ENCODE measurements at regions of chr2 and their contacts with region 1.

Region 1: GRCh38 chr2:11784747-11785610 is 38.5 kb downstream of the LPIN1 start:
- DNase-seq: peak; percentile 12 to 67 (median 48)
- ATAC-seq: peak; percentile 74
- H3K4me3 ChIP-seq: no peak overlapping the region
- H3K4me3 Mint-ChIP-seq: no peak overlapping the region
- H3K27ac ChIP-seq: no peak overlapping the region
- H3K27ac Mint-ChIP-seq: no peak overlapping the region
- H3K4me1 ChIP-seq: no peaks in the 10 kb centered on the region
- H3K4me1 Mint-ChIP-seq: no peaks in the 10 kb centered on the region
- H3K27me3 ChIP-seq: no peaks in the 10 kb centered on the region
- H3K27me3 Mint-ChIP-seq: no peaks in the 10 kb centered on the region
- CTCF ChIP-seq: peak; percentile 90

Region 2: GRCh38 chr2:11738589-11739436 is 46.2 kb before region 1 on chr2:
- CTCF ChIA-PET with region 1: interaction called, 27 read pairs
- POLR2A ChIA-PET with region 1: no interaction called
- intact Hi-C with region 1: no loop called
- DNase-seq: peak in 4 of 9 experiments; percentile 26 to 70 (median 48)
- ATAC-seq: peak; percentile 56
- H3K4me3 ChIP-seq: no peak overlapping the region
- H3K4me3 Mint-ChIP-seq: no peak overlapping the region
- H3K27ac ChIP-seq: no peak overlapping the region
- H3K27ac Mint-ChIP-seq: no peak overlapping the region
- H3K4me1 ChIP-seq: peaks cover 4% of the 10 kb centered on the region
- H3K4me1 Mint-ChIP-seq: peaks cover 3% of the 10 kb centered on the region
- H3K27me3 ChIP-seq: no peaks in the 10 kb centered on the region
- H3K27me3 Mint-ChIP-seq: peaks cover 9% of the 10 kb centered on the region
- CTCF ChIP-seq: no peak

Region 3: DNA sequence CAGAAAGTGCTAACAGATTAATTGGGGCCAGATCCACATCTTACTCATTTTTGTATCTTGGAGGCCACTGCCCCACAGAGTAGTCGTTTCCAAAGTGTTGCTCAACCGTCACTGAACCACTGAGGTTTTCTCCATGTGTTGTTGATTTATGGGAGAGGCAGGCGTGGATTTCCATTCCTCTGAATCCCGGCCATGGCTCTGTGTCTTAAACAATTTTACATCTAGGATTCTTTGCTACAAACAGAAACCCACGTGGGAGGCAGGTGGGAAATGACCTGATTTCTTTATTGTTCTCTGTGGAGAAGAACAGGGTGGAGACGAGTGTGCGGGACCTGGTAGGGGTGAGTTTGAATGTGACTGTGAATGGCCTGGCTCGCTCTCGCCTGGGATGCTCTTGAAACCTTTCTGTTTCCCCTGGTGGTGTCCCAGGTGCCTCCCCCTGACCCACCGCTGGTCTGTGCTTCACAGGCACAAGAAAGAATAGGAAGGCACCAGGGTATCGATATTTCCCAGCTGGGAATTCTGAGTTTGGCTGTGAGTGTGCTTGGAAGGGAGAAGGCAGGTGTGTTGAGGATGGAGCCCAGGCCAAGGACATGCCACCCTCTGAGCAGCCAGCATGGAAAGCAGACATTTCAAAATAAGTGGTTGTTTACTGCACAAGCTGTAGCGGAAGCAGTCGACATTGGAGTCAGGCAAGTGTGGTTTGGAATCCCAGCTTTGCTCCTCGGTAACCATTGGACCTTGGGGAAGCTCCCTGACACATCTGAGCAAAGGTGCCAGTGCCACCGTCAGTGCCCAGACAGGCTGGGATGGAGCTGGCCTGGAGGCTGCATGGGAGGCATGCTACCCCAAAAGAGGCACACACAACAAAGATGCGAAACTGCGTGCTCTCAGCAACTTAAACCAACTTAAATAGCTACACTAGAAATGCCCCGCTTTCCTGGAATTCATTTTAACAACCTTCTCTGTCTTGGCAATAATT is 11.5 kb after region 1 on chr2:
- CTCF ChIA-PET with region 1: interaction called, 11 read pairs
- POLR2A ChIA-PET with region 1: no interaction called
- intact Hi-C with region 1: no loop called
- DNase-seq: peak in 1 of 9 experiments; percentile 35
- ATAC-seq: no peak
- H3K4me3 ChIP-seq: no peak overlapping the region
- H3K4me3 Mint-ChIP-seq: no peak overlapping the region
- H3K27ac ChIP-seq: no peak overlapping the region
- H3K27ac Mint-ChIP-seq: no peak overlapping the region
- H3K4me1 ChIP-seq: no peaks in the 10 kb centered on the region
- H3K4me1 Mint-ChIP-seq: no peaks in the 10 kb centered on the region
- H3K27me3 ChIP-seq: no peaks in the 10 kb centered on the region
- H3K27me3 Mint-ChIP-seq: no peaks in the 10 kb centered on the region
- CTCF ChIP-seq: no peak

Region 4: GRCh38 chr2:11955884-11956291 is 170.9 kb after region 1 on chr2:
- CTCF ChIA-PET with region 1: no interaction called
- POLR2A ChIA-PET with region 1: no interaction called
- intact Hi-C with region 1: no loop called
- DNase-seq: no peak
- ATAC-seq: no peak
- H3K4me3 ChIP-seq: no peak overlapping the region
- H3K4me3 Mint-ChIP-seq: no peak overlapping the region
- H3K27ac ChIP-seq: no peak overlapping the region
- H3K27ac Mint-ChIP-seq: no peak overlapping the region
- H3K4me1 ChIP-seq: no peaks in the 10 kb centered on the region
- H3K4me1 Mint-ChIP-seq: peaks cover 5% of the 10 kb centered on the region
- H3K27me3 ChIP-seq: no peaks in the 10 kb centered on the region
- H3K27me3 Mint-ChIP-seq: peaks cover 6% of the 10 kb centered on the region
- CTCF ChIP-seq: no peak

Region 5: GRCh38 chr2:12106440-12107080 is 321.6 kb after region 1 on chr2:
- CTCF ChIA-PET with region 1: no interaction called
- POLR2A ChIA-PET with region 1: no interaction called
- intact Hi-C with region 1: no loop called
- DNase-seq: no peak
- ATAC-seq: no peak
- H3K4me3 ChIP-seq: no peak overlapping the region
- H3K4me3 Mint-ChIP-seq: no peak overlapping the region
- H3K27ac ChIP-seq: no peak overlapping the region
- H3K27ac Mint-ChIP-seq: no peak overlapping the region
- H3K4me1 ChIP-seq: peaks cover 35% of the 10 kb centered on the region
- H3K4me1 Mint-ChIP-seq: peaks cover 33% of the 10 kb centered on the region
- H3K27me3 ChIP-seq: no peaks in the 10 kb centered on the region
- H3K27me3 Mint-ChIP-seq: peaks cover 2% of the 10 kb centered on the region
- CTCF ChIP-seq: no peak